HAP-1 (cell line): ENCODE measurements at regions of chr4 and their contacts with region 1.

Region 1: GRCh38 chr4:157961229-157961990 is 211.4 kb downstream of the GASK1B start:
- DNase-seq: no peak
- H3K4me3 ChIP-seq: no peak overlapping the region
- H3K4me1 ChIP-seq: peaks cover 9% of the 10 kb centered on the region
- H3K27me3 ChIP-seq: no peaks in the 10 kb centered on the region

Region 2: DNA sequence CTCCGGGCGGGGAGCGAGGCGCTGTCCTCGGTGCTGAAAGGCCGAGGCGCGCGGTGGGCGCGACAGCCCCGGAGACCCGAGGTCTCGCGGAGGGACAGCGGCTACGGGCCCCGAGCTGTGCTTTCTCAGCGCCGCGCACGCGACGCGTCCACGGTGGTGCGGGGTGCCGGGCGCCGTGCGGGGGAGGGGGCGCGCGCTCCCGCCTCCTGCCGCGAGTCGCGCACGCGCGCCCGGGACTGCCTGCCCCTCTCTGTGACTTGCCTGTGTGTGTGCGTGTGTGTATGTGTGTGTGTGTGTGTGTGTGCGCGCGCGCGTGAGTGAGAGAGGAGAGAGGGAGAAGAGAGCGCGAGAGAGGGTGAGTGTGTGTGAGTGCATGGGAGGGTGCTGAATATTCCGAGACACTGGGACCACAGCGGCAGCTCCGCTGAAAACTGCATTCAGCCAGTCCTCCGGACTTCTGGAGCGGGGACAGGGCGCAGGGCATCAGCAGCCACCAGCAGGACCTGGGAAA is 741.0 kb before region 1 on chr4 and contains the start of gene GRIA2:
- in situ Hi-C with region 1: loop called (anchors 25 kb)
- DNase-seq: peak; percentile 65 to 86
- H3K4me3 ChIP-seq: peak within 1 kb of the TSS; percentile 29
- H3K4me1 ChIP-seq: no peaks in the 10 kb centered on the region
- H3K27me3 ChIP-seq: no peaks in the 10 kb centered on the region